PC-9 (cell line): ENCODE measurements at regions of chr11 and their contacts with region 1.

Region 1: DNA sequence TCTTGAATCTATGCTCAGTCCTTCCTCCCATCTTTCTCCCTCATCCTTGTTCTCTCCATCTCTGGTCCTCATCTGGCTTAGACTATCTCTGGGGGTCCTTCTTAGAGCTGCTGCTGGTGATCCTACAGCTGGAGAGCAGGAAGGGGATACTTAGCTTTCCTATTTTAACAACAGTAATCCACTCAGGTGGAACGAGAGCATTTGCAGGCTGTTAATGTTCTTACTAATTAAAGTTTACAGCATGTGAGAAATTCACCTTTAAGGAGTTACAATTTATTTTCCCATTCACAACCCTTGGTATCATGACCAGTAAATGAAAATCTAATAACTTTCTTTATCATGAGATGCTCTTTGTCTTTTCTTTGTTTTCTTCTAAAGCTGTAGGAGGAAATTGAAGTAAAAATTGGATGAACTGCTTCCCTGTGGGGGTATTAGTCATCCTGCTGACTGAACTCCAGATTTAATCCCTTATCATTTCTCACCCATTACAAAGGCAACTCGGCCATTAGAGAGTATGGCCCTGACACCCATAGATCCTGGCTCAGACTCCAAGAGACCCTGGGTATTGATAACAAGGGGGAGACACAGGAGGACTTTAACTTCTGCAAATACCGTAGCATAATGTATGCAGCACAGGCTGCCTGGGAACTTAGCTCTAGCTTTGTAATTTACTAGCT is 37.6 kb upstream of the MTNR1B start:
- DNase-seq: peak in 1 of 2 experiments; percentile 50
- H3K4me3 ChIP-seq: no peak overlapping the region
- H3K27ac ChIP-seq: no peak overlapping the region
- H3K4me1 ChIP-seq: no peaks in the 10 kb centered on the region
- H3K27me3 ChIP-seq: no peaks in the 10 kb centered on the region
- CTCF ChIP-seq: no peak

Region 2: DNA sequence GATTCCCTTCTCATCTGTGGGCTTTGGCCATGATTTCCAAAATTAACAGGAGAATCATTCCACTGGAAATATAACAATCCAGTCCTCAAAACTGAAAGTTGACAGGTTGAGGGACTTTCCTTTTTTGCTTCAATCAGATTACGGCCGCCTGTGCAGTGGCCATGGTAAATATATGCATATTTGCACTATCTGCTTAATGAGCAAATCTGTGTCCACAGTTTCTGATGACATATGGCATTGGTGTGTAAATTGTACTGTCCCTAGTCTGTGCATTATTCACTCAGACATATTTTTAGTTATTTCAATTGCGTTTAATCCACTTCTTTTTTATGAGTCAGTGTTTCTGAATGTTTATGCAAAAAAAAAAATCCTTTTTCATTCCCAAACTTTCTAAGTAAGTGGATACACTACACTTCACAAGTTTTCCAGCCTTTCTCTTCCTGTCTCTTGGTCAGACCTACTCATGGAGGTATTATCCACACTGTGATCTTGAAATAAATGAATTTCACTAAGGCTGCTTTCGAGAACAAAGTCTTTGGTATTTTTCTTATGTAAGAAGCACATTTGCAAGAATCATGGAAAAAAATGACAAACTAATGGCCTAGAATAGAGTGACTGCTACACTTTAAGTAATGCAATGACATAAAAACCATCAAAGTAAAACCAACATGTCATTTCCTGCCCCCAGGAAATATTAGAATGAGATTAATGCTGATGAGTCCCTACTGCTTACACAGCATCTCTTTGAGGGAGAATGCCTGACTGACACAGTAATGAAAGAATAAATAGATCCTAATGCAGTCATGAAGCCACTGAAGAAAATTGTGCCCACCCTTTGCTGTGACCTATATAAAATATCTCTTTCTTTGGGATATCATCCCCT is 38.8 kb before region 1 on chr11:
- CTCF ChIA-PET with region 1: no interaction called
- POLR2A ChIA-PET with region 1: no interaction called
- intact Hi-C with region 1: no loop called
- DNase-seq: no peak
- H3K4me3 ChIP-seq: no peak overlapping the region
- H3K27ac ChIP-seq: no peak overlapping the region
- H3K4me1 ChIP-seq: no peaks in the 10 kb centered on the region
- H3K27me3 ChIP-seq: no peaks in the 10 kb centered on the region
- CTCF ChIP-seq: no peak

Region 3: DNA sequence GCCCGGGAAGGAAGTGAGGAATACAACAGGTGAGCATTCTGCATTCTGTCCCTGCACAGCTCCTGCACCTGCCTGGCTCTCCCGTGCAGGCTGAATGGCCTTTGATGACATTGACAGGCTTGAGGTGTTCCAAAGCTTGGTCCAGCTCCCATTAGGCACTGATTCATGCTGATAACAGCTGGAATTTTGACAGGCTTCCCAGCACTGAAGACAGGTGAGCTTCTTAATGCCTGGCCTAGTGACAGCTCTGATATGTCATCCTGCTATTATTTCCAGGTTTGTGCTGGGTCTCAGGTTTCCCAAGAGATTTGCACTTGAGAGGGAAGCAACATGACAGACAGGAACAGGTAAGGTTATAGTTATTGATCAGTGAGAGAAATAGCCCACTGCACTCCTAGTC is 20.4 kb before region 1 on chr11:
- CTCF ChIA-PET with region 1: interaction called, 10 read pairs
- POLR2A ChIA-PET with region 1: no interaction called
- intact Hi-C with region 1: no loop called
- DNase-seq: no peak
- H3K4me3 ChIP-seq: no peak overlapping the region
- H3K27ac ChIP-seq: no peak overlapping the region
- H3K4me1 ChIP-seq: no peaks in the 10 kb centered on the region
- H3K27me3 ChIP-seq: no peaks in the 10 kb centered on the region
- CTCF ChIP-seq: no peak

Region 4: GRCh38 chr11:92948116-92948515 is 16.2 kb after region 1 on chr11:
- CTCF ChIA-PET with region 1: no interaction called
- POLR2A ChIA-PET with region 1: no interaction called
- intact Hi-C with region 1: no loop called
- DNase-seq: no peak
- H3K4me3 ChIP-seq: no peak overlapping the region
- H3K27ac ChIP-seq: no peak overlapping the region
- H3K4me1 ChIP-seq: peaks cover 7% of the 10 kb centered on the region
- H3K27me3 ChIP-seq: no peaks in the 10 kb centered on the region
- CTCF ChIP-seq: no peak

Region 5: GRCh38 chr11:92978271-92979111 is 46.6 kb after region 1 on chr11:
- CTCF ChIA-PET with region 1: no interaction called
- POLR2A ChIA-PET with region 1: no interaction called
- intact Hi-C with region 1: no loop called
- DNase-seq: no peak
- H3K4me3 ChIP-seq: no peak overlapping the region
- H3K27ac ChIP-seq: no peak overlapping the region
- H3K4me1 ChIP-seq: no peaks in the 10 kb centered on the region
- H3K27me3 ChIP-seq: no peaks in the 10 kb centered on the region
- CTCF ChIP-seq: no peak